ENCODE measurements at regions of chr1 and their contacts with region 1.

Region 1: DNA sequence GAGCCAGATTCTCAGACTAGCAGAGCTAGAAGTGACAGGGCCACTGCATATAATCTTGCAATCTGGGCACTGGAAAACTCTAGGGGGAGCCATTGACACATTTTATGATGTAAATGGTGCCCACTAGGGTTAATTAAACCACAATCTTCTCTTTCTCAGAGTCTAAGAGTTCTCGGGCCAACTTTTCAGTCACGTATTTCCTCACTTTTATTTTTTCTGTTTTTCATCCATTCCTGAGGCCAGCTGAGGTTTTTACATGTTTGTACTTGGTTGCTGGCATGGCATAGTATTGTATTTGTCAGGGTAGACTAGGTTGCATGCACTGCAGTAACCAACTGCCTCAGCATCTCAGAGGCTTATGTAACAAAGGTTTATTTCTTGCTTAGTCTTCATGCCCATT is 138.2 kb downstream of the ZNF326 start:
- DNase-seq: peak; percentile 55

Region 2: GRCh38 chr1:90045853-90046563 is 87.1 kb before region 1 on chr1:
- CTCF ChIA-PET with region 1: interaction called, 10 read pairs
- POLR2A ChIA-PET with region 1: no interaction called
- DNase-seq: peak; percentile 43

Measured in HEK293T (cell line).